Common myeloid progenitor, CD34-positive (primary cell): ENCODE measurements at regions of chr1 and their contacts with region 1.

Region 1: GRCh38 chr1:226708342-226708780 is 30.7 kb downstream of the ITPKB start:
- DNase-seq: peak in 2 of 3 donors; percentile 47 to 59
- H3K4me3 ChIP-seq: no peak overlapping the region
- H3K27ac ChIP-seq: peak overlapping the region in 1 of 2 experiments; percentile 72
- H3K4me1 ChIP-seq: peaks cover 26 to 63% (median 57%) of the 10 kb centered on the region in 4 experiments
- H3K27me3 ChIP-seq: no peaks in the 10 kb centered on the region

Region 2: GRCh38 chr1:226697151-226697939 is 11.0 kb before region 1 on chr1:
- CTCF ChIA-PET with region 1: interaction called, 10 read pairs
- POLR2A ChIA-PET with region 1: no interaction called
- DNase-seq: peak in 1 of 3 donors; percentile 48
- H3K4me3 ChIP-seq: no peak overlapping the region
- H3K27ac ChIP-seq: no peak overlapping the region
- H3K4me1 ChIP-seq: peaks cover 0 to 14% (median 7%) of the 10 kb centered on the region in 4 experiments
- H3K27me3 ChIP-seq: no peaks in the 10 kb centered on the region

Region 3: GRCh38 chr1:226723657-226724532 is 15.5 kb after region 1 on chr1:
- CTCF ChIA-PET with region 1: interaction called, 16 read pairs
- POLR2A ChIA-PET with region 1: no interaction called
- DNase-seq: no peak
- H3K4me3 ChIP-seq: no peak overlapping the region
- H3K27ac ChIP-seq: no peak overlapping the region
- H3K4me1 ChIP-seq: peaks cover 32 to 67% (median 57%) of the 10 kb centered on the region in 4 experiments
- H3K27me3 ChIP-seq: no peaks in the 10 kb centered on the region